ENCODE measurements at regions of chr20 and their contacts with region 1.

Region 1: DNA sequence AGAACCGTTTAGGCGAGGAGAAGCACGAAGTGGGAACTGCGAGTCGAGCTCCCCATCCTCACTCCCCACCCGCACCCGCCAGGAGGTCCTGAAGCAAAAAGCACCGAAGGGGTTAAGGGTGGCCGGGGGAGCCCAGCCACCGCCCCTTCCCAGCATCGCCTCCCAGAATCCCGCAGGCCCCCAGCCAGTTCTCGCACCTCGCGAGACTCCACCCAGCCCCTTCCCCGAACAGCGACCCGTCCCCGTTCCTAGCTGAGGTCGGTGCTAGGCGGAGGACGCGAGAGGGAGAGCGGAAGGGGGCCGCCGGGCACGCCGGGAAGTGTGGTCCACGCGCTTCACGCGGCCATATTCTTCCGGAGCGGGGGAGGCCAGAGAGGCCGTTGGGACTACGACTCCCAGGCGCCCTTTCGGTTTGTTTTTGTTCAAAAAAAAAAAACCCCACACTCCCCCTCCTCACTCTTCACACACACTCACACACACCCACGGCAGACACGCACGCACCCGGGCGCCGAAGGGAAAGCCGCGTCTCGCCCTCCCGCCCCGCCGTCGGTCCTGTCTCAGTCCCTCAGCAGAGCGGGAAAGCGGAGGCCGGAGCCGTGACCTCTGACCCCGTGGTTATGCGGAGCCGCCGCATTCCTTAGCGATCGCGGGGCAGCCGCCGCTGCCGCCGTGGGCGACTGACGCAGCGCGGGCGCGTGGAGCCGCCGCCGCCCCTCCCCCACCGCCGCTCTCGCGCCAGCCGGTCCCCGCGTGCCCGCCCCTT is at the start of gene ASXL1:
- DNase-seq: peak; percentile 96
- H3K4me3 Mint-ChIP-seq: peak within 1 kb of the TSS; percentile 98
- H3K27ac Mint-ChIP-seq: peak within 1 kb of the TSS; percentile 100
- H3K4me1 Mint-ChIP-seq: peaks cover 67% of the 10 kb centered on the region
- H3K27me3 Mint-ChIP-seq: no peaks in the 10 kb centered on the region
- total RNA-seq, gene ASXL1: 136 and 142 TPM in 2 replicates

Region 2: GRCh38 chr20:31723319-31724078 is 634.6 kb before region 1 on chr20:
- intact Hi-C with region 1: loop called (anchors 5 kb)
- DNase-seq: peak; percentile 97
- H3K4me3 Mint-ChIP-seq: peak overlapping the region; percentile 97
- H3K27ac Mint-ChIP-seq: peak overlapping the region; percentile 93
- H3K4me1 Mint-ChIP-seq: peaks cover 20% of the 10 kb centered on the region
- H3K27me3 Mint-ChIP-seq: no peaks in the 10 kb centered on the region

Region 3: DNA sequence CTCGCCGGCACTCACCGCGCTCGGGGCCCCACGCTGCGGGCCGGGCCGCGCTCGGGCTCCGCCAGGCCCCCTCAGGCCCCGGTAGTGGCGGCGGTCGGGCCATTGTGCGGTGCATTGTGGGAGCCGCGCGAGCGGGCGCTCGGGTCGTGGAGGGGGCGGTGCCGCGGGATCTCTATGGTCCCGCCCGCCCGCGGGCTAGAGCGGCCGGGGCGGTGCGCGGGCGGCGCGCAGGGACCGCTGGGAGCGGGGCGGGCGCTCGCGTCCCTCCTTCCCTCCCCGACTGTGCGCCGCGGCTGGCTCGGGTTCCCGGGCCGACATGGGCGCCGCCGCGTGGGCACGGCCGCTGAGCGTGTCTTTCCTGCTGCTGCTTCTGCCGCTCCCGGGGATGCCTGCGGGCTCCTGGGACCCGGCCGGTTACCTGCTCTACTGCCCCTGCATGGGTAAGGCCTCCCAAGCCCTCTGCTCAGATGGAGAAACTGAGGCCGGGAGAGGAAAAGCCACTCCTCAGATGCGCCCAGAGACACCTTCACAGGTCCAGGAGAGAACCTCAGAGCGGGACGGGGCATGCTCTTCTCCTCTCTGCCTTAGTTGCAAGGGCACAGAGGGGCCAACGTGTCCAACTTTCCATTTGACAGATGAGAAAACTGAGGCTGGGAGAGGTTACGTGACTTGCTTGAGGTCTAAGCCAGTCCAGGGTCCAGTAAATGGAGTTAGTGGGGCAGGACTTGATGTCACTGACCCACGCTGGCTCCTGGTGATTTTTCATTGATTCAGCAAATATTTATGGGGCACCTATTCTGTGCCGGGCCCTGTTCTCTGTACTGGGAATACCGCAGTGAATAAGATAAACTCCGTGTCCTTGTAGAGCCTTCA is 150.2 kb before region 1 on chr20 and contains the starts of genes PLAGL2 and POFUT1:
- intact Hi-C with region 1: loop called (anchors 1 kb)
- DNase-seq: peak; percentile 90
- H3K4me3 Mint-ChIP-seq: peak within 1 kb of the TSS; percentile 100
- H3K27ac Mint-ChIP-seq: peak within 1 kb of the TSS; percentile 93
- H3K4me1 Mint-ChIP-seq: peaks cover 81% of the 10 kb centered on the region
- H3K27me3 Mint-ChIP-seq: no peaks in the 10 kb centered on the region
- total RNA-seq, gene PLAGL2: 123 and 126 TPM in 2 replicates
- total RNA-seq, gene POFUT1: 69.0 and 73.0 TPM in 2 replicates

Region 4: DNA sequence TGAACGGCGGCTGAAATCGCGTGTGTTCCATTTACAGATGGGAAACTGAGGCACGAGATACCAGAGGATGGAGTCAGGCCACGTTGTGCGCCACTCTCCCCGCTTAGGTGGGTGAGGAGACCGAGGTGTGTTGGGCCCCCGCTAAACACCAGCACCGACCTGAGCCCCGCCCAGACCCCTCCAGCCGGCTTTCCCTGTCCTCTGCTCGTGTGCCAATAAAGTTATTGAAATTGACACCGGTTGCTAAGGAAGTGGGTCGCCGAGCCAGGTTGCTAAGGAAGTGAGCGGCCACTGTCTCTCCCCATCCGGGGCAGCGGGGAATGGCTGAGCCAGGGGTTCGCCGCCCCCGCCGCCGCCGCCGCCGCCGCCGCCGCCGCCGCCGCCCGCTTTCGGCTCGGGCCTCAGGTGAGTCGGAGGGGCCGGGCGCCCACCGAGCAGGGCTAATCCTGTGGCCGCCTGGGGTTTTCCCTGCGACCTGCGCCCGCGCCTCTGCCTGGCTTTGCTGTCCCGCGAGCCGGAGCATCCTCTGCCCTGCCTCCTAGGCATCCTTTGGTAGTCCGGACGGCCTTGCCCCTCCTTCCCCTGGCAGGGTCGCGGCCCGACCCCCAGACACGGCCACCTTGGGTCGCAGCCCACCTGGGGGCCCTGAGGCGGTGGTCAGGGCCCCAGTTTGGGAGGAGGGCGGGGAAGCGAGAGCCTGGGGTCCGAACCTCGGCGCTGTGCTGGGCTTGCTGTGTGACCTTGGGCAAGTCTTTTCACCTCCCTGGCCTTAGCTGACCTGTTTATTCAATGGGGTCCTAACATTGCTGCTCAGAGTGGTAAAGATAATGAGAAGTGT is 80.5 kb before region 1 on chr20 and contains the start of gene KIF3B:
- intact Hi-C with region 1: loop called (anchors 2 kb)
- DNase-seq: peak; percentile 87
- H3K4me3 Mint-ChIP-seq: peak within 1 kb of the TSS; percentile 91
- H3K27ac Mint-ChIP-seq: peak within 1 kb of the TSS; percentile 84
- H3K4me1 Mint-ChIP-seq: peaks cover 49% of the 10 kb centered on the region
- H3K27me3 Mint-ChIP-seq: no peaks in the 10 kb centered on the region
- total RNA-seq, gene KIF3B: 38.1 and 39.1 TPM in 2 replicates

Region 5: DNA sequence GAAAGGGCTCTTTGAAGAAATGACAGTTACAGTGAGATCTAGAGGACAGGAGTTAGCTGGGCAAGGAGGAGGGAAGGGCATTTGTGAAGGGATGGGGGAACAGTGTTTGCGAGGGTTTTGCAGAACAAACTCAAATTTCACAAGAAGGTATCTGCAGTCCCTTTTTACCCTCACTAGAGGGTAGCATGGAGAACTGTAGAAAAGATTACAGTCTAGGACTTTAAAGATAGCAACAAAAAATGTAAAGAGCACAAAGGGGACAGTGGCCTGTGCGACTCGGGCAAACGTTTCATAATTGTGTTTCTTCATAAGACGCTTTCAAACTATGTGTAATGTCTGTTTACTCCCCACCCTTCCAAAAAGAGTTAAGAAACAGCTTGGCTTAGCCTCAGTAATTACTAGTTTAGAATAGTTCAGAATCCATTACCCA is 21.1 kb before region 1 on chr20:
- intact Hi-C with region 1: loop called (anchors 1 kb)
- DNase-seq: no peak
- H3K4me3 Mint-ChIP-seq: no peak overlapping the region
- H3K27ac Mint-ChIP-seq: no peak overlapping the region
- H3K4me1 Mint-ChIP-seq: peaks cover 39% of the 10 kb centered on the region
- H3K27me3 Mint-ChIP-seq: no peaks in the 10 kb centered on the region

Region 6: GRCh38 chr20:32406701-32407100 is 48.7 kb after region 1 on chr20:
- intact Hi-C with region 1: loop called (anchors 2 kb)
- DNase-seq: no peak
- H3K4me3 Mint-ChIP-seq: no peak overlapping the region
- H3K27ac Mint-ChIP-seq: no peak overlapping the region
- H3K4me1 Mint-ChIP-seq: peaks cover 35% of the 10 kb centered on the region
- H3K27me3 Mint-ChIP-seq: no peaks in the 10 kb centered on the region

Region 7: DNA sequence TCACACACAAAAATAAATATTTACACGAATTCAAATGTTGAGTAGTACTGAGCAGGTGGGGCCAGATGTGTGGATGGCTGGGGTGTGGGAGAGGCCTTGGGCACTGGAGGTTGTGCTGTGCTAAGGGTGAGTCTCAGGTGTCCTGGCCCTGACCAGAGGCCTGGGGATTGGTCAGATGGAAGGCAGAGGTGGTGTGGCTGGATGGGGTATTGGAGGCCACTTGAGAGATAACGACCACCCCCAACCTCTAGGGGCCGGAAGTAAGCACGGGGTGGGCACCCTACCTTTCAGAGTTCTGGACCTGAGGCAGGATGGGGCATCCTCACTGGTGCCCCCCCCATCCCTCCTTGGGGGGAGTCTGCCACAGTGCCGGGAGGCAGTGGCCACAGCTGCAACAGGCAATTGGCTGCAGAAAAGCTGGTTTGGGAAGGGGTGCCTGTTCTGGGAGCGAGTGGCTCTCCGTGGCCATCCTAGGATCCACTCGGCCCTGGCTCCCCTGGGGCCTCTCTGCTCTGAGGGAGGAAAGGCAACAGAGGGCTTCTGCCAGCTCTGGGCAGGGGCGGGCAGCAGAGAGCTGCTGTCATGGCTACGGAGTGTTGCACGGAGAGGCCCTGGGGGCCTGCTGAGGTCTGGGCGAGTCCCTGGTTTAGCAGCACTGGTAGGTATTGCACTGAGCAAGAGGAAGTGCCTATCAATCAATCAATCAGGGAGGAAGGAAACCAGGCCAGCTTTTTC is 87.7 kb after region 1 on chr20:
- intact Hi-C with region 1: no loop called
- DNase-seq: no peak
- H3K4me3 Mint-ChIP-seq: no peak overlapping the region
- H3K27ac Mint-ChIP-seq: peak overlapping the region; percentile 37
- H3K4me1 Mint-ChIP-seq: peaks cover 14% of the 10 kb centered on the region
- H3K27me3 Mint-ChIP-seq: no peaks in the 10 kb centered on the region

Region 8: DNA sequence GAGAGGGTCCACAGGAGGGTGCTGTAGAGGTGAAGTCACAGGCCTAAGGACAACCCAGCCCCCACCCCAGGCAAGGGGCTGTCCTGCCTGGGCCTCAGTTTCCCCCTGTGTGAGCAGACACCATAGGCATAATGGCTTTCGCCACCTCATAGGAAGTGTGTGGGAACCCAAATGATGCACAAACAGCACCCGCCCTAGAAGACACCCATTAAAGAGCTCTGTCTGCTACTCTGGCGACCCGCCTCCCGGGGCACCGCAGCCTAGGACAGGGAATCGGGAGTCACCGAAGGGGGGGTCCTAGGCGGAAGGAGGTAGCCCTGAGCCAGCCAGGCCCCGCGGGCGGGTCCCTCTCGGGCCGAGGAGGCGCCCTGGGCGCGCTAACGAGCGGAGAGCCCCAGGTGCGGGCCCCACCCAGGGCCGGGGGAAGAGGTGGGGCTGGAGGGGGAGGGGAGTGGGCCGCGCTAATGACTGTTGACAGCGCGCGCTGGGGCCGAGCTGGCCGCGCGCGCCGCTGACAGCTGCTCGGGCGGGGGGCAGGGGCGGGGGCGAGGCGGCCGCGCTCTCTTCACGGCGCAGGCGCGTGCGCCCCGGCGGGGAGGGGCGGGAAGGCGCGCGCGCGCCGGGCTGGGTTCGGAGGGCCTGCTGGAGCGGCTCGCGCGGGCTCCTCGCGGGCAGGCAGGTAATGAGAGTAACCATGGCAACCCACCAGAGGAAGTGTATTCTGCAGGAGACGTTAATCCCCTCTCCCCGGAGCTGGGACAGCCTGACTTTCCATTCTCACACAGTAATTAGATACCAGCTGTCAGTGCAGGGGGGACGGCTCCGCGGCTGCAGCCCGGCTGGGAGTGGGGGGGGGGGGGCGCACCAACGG is 178.1 kb after region 1 on chr20:
- intact Hi-C with region 1: loop called (anchors 1 kb)
- DNase-seq: peak; percentile 76
- H3K4me3 Mint-ChIP-seq: peak overlapping the region; percentile 76
- H3K27ac Mint-ChIP-seq: peak overlapping the region; percentile 90
- H3K4me1 Mint-ChIP-seq: peaks cover 84% of the 10 kb centered on the region
- H3K27me3 Mint-ChIP-seq: no peaks in the 10 kb centered on the region

Region 9: GRCh38 chr20:32839227-32839981 is 481.4 kb after region 1 on chr20:
- intact Hi-C with region 1: no loop called
- DNase-seq: no peak
- H3K4me3 Mint-ChIP-seq: no peak overlapping the region
- H3K27ac Mint-ChIP-seq: no peak overlapping the region
- H3K4me1 Mint-ChIP-seq: peaks cover 40% of the 10 kb centered on the region
- H3K27me3 Mint-ChIP-seq: no peaks in the 10 kb centered on the region

Region 10: DNA sequence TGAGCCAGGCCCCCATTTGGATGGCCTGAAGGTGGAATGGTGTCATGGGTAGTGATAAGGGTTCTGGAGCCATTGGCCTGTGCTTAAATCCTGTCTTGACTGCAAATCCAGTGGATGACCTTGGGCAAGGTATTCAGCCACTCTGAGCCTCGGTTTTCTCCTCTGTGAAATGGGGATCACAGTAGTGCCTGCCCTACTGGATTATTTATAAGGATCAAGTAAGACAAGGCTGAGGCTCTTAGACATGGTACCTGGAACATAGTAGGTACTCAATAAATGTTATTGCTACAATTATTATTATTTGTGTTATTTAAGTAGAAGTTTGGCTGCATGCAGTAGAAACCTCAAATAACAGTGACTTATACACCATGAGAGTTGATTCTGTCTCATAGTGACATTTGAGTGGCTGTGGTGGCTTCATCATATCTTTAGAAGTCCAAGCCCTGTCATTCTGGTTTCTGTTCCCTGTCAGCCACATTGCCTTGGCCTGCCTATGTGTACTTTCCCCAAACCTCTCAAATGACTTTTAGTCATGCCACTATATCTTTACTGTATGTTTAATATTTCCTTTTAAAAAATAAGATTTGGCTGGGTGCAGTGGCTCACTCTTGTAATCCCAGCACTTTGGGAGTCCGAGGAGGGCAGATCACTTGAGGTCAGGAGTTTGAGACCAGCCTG is 1415.5 kb after region 1 on chr20:
- intact Hi-C with region 1: no loop called
- DNase-seq: no peak
- H3K4me3 Mint-ChIP-seq: no peak overlapping the region
- H3K27ac Mint-ChIP-seq: no peak overlapping the region
- H3K4me1 Mint-ChIP-seq: peaks cover 28% of the 10 kb centered on the region
- H3K27me3 Mint-ChIP-seq: no peaks in the 10 kb centered on the region

Measured in activated T-helper 1 cell treated with anti-CD3 and anti-CD28 coated beads, Interleukin-12 subunit alpha, Interleukin-12 subunit beta, Interleukin-2, Interleukin-4 antibody, amounts not matched to agents 30 ng/mL and 10 ng/mL and 1 ng/mL, durations not matched to agents 14 hours and 24 hours and 36 hours (primary cell).